Posterior vena cava (tissue), 2 donors: ENCODE measurements at regions of chr10 and their contacts with region 1.

Region 1: GRCh38 chr10:79206300-79207095 is 137.7 kb downstream of the ZMIZ1 start:
- DNase-seq: no peak

Region 2: DNA sequence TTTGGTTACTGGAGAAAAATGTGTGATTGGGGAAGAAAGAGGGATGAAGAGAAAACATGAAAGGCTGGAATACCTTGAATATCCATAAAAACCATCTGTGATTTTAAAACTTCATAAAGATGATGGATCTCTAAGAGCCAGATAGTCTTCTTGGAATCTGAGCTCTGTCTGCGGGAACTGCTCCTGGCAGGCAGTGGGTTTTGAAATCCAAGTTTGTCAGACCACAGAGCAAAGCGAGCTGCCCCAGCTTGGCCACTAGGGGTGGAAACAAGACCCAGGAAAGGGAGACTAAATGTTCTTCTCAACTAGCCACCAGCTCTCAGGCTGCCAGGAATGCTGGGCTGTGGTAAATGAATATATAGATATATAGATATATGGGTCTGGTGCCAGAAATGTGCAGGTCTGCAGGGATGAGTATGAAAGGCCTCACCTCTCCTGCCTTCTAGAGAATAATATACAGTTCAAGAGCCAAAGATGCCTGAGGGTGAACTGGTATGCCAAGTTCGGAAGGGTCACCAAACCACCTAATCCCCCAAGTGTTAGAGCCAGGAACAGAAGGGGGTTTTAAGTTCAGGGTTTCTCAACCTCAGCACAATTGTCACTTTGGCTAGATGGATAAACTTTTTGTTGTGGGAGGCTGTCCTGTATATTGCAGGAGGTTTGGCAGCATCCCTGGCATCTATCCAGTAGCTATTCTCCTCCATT is 1777.7 kb before region 1 on chr10:
- intact Hi-C with region 1: no loop called
- DNase-seq: peak; percentile 90

Region 3: GRCh38 chr10:77909749-77910375 is 1296.6 kb before region 1 on chr10:
- intact Hi-C with region 1: loop called in 1 of 2 experiments (anchors 5 kb)
- DNase-seq: no peak

Region 4: DNA sequence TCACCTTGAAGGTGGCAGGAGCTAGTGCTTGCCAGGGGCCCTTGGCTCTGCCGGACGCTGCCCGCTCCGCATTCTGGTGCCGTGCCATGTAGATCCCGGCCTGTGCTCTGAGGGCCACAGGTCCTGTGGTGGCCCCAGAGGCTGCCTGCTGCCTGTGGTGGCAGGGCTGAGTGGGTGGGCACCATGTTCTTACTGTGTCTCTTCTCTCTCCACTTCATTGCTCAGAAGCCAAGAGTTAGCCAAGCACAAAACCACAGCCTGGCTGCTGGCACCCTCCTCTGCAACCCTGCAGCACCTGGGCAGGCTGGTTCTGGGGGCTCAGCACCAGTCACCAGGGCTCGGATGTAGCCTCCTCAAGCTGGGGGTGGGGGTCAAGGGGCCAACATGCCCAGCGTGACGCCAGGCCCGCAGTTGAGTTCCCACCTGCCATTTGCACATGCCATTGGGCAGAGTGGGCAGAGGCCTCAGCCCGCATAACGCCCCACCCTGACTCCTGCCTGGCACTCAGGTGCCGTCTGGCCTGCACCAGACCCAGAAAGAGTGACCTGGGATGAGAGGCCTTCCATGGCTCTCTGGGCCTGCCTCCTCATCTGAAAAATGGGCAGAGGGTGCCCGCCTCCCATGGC is 121.4 kb before region 1 on chr10:
- intact Hi-C with region 1: loop called in 1 of 2 experiments (anchors 5 kb)
- DNase-seq: no peak